Right ventricle myocardium inferior (tissue), 1 donor: ENCODE measurements at regions of chr19 and their contacts with region 1.

Region 1: DNA sequence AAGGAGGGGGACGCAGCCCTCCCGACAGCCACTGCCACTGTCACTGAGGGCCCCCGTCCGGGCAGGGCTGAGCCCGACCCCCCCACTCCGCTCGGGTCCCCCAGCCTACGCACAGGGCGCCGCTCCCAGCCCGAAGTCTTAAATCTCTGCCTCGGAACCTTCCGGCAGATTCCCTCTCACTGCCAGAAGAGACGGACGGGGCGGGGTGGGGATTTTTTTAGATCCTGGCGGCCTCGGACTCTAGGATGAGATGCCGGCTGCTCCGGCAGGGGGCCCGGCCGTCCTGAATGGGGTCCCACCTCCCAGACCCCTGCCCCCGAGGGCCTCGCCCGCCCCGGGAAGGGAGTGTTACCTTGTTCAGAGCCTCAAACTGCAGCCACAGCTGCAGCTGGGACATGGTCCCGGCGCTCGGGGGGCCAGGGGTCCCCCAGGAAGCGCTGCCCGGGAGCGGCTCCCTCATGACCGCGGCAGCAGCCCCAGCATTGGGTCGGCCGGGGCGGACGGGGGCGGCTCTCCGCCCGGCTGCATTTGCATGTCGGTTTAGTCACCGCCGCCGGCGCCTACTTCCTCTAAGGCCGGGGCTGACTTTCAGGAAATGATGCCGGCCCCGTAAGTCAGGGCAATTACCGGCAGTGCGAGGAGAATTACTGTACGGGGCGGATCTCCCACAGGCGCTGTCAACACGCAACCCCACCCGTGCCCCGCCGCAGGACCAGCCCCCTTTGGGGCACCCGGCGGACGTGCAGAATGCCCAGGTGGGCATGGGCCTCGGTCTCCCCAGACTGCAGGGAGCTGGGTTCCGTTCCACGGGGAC is 28.2 kb downstream of the GPX4 start:
- DNase-seq: peak; percentile 97
- ATAC-seq: peak; percentile 77

Region 2: DNA sequence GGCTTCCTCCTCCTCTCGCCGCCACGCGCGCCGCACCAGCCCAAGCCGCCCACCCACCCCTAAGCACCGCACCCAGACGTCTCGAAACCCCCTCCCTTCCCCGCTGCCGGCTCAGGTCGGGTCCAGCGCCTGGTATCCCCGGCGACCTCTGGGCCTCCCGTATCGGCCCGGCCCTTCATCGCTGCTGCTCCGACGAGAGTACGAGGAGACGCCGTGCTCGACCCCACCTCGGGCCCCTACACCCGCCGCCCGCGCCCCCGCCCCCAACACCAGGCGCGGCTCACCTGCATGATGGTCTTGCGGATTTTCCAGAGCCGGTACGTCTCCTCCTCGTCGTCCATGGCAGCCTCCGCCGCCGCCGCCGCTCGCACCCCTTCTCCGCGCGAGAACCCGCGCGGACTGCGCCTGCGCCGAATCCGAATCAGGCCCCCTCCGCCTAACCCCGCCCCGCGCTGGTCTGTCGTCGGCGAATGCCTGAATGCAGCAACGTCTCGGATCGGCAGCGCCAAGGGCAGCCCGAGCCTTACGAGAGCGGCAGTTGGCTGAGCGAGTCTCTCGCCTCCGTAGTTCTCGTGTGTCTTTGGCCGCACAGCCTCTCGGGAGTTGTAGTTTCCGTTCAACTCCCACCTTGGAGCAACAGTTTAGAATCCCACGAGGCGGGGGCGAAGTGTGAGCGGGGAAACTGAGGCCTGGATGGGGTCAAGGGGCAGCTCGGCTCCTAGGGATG is 36.8 kb before region 1 on chr19 and contains the start of gene POLR2E:
- intact Hi-C with region 1: no loop called
- DNase-seq: peak; percentile 100
- ATAC-seq: peak; percentile 96
- total RNA-seq, gene POLR2E: 142 TPM

Region 3: DNA sequence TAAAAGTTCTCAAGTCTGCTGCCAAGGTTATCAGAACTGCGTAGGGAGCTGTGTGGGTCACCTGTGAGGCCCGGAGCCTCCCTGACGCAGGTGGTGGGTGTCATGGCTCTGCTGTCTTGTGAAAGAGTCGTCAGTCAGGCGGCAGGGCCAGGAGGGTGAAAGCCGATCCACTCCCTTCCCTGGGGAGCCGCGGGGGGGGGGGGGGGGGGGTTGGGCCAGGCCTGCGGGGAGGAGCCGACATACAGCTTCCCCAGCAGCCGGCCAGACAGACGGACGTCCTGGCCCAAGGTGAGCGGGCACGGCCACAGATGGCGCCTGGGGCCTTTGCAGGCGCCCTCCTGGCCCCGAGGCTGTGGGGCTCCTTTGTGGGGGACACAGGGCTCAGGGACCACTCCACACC is 29.8 kb after region 1 on chr19:
- intact Hi-C with region 1: no loop called
- DNase-seq: peak; percentile 44
- ATAC-seq: no peak

Region 4: DNA sequence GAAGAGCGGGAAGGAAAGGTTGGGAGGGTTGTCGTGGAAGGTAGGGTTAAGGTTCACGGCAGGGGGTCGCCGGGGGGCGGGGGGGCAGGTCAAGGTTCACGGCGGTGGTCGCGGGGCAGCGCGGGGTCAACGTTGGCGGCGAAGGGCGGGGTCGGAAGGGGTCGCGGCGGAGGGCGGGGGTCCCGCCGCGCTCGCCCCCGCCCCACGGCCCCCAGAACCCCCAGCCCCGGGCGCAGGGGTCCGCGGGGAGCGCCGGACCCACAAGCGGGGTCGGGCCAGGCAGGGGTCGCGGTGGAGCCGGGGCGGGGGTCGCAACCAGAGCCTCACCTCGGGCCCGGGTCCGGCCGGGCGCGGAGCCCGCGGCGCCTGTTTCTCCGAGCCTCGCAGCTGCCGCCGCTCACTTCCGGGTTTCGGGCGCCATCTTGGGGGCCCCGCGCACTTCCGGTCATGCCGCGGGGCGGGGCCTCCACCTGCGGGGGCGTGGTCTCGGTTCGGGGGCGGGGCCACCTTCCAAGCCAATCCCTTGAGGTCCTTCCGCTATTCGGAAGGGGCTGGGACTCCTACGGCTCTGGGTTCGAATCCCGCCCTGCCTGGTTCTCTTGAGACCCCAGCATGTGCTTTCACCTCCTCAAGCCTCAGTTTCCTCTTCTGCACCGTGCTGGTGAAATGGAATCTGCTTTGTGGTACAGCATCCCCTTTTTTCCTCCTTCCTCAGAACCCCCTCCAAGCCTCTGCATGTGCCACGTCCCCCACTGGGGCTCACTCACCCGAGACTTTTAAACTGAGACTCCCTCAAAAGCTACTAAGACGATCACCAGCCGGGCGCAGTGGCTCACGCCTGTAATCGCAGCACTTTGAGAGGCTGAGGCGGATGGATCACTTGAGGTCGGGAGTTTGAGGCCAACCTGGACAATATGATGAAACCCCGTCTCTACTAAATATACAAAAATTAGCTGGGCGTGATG is 42.2 kb after region 1 on chr19 and contains the start of gene SBNO2:
- intact Hi-C with region 1: loop called (anchors 5 kb)
- DNase-seq: peak; percentile 96
- ATAC-seq: peak; percentile 83
- total RNA-seq, gene SBNO2: 14.7 TPM

Region 5: GRCh38 chr19:1315470-1316231 is 183.7 kb after region 1 on chr19:
- intact Hi-C with region 1: no loop called
- DNase-seq: peak; percentile 79
- ATAC-seq: peak; percentile 86